ENCODE measurements at regions of chr7 and their contacts with region 1.

Region 1: DNA sequence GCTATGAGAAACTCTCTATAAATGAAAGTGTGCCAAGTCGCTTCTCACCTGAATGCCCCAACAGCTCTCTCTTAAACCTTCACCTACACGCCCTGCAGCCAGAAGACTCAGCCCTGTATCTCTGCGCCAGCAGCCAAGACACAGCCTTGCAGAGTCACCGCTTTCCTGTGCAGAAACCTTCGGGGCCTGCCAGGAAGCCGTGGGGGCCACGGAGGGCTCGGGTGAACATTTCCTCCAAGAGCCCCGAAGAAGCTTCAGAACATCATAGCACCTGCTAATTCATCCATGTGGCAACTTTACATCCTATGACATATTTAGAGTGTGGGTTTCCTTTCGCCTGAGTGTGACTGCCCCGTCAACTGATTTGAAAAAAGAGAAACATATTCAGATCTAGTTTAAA is 55.7 kb upstream of the PRSS58 start:
- DNase-seq: no peak
- CTCF ChIP-seq: no peak

Region 2: GRCh38 chr7:142301923-142302550 is 11.5 kb before region 1 on chr7:
- CTCF ChIA-PET with region 1: interaction called, 19 read pairs
- POLR2A ChIA-PET with region 1: no interaction called
- DNase-seq: peak; percentile 39
- CTCF ChIP-seq: peak; percentile 48

Region 3: DNA sequence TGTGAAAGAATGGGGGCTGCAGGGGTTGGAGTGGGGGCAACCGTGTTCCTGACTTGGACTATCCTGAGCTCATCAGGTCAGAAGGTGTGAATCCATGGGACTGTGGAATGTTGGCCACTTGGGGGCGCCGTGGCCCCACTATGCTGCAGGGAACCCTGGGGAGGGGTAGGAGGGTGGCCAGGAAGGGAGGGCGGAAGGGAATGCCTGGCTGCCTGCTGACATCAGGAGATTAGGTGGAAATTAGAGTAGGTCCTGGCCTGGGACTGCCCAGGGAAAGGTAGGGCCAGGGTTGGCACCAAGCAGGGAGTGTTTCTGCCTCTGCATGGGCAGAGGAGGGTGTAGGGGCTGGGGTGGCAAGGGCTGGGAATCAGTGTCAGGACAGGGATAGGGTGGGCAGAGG is 10.2 kb after region 1 on chr7:
- CTCF ChIA-PET with region 1: interaction called, 16 read pairs
- POLR2A ChIA-PET with region 1: no interaction called
- DNase-seq: no peak
- CTCF ChIP-seq: peak; percentile 23